ENCODE measurements at regions of chr9 and their contacts with region 1.

Region 1: DNA sequence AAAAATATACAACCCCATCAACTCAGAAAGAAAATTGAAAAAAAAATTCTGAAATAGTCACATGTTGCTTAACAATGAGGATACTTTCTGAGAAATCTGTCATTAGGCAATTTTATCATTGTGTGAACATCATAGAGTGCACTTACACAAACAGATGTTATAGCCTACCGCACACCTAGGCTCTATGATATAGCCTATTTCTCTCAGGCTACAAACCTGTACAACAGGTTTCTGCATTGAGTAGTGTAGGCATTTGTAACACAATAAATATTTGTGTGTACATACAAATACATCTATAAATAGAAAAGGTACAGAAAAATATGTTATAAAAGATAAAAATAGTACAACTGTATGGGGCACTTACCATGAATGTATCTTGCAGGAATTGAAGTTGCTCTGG is 820.1 kb downstream of the TLE4 start:
- DNase-seq: no peak
- H3K4me3 ChIP-seq: no peak overlapping the region
- H3K4me3 Mint-ChIP-seq: no peak overlapping the region
- H3K27ac ChIP-seq: no peak overlapping the region
- H3K27ac Mint-ChIP-seq: no peak overlapping the region
- H3K4me1 ChIP-seq: no peaks in the 10 kb centered on the region
- H3K4me1 Mint-ChIP-seq: no peaks in the 10 kb centered on the region
- H3K27me3 ChIP-seq: no peaks in the 10 kb centered on the region
- H3K27me3 Mint-ChIP-seq: no peaks in the 10 kb centered on the region
- CTCF ChIP-seq: no peak

Region 2: DNA sequence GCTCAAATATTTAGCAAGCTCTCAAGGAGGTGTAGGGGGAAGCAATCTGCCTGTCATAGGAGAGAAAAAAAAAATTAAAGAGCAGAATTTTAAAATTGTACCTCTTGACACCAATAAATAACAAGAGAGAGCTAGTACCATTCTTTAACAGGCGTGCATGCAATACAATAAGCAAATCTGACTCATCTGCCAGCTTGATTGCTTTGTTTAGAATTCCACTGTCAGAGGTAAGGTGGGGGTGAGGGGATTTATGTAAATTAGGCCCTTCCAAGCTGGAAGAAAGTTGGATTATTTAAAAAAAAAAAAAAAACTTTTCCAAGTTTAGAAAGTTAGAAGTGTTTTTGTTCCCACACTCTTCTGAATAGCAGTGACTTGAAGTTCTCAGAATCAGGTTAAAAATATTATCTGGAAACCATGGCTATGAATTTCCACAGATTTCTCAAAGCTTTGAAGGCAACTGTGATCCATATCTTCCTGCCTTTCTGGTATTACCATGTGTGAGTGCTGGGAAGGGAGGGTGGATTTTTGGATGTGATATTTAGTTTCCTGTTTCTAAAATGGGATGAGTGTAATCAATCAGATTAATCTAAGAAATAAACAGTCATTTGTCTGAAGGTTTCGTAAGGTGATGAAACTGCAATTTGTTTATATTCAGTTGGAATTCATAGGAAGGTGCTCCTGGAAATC is 342.6 kb before region 1 on chr9:
- intact Hi-C with region 1: no loop called
- DNase-seq: no peak
- H3K4me3 ChIP-seq: no peak overlapping the region
- H3K4me3 Mint-ChIP-seq: no peak overlapping the region
- H3K27ac ChIP-seq: no peak overlapping the region
- H3K27ac Mint-ChIP-seq: no peak overlapping the region
- H3K4me1 ChIP-seq: no peaks in the 10 kb centered on the region
- H3K4me1 Mint-ChIP-seq: no peaks in the 10 kb centered on the region
- H3K27me3 ChIP-seq: no peaks in the 10 kb centered on the region
- H3K27me3 Mint-ChIP-seq: no peaks in the 10 kb centered on the region
- CTCF ChIP-seq: no peak

Region 3: GRCh38 chr9:80503671-80504281 is 111.9 kb after region 1 on chr9:
- intact Hi-C with region 1: loop called in 1 of 2 experiments (anchors 10 kb)
- DNase-seq: no peak
- H3K4me3 ChIP-seq: no peak overlapping the region
- H3K4me3 Mint-ChIP-seq: no peak overlapping the region
- H3K27ac ChIP-seq: no peak overlapping the region
- H3K27ac Mint-ChIP-seq: no peak overlapping the region
- H3K4me1 ChIP-seq: no peaks in the 10 kb centered on the region
- H3K4me1 Mint-ChIP-seq: no peaks in the 10 kb centered on the region
- H3K27me3 ChIP-seq: no peaks in the 10 kb centered on the region
- H3K27me3 Mint-ChIP-seq: no peaks in the 10 kb centered on the region
- CTCF ChIP-seq: no peak